ENCODE measurements at regions of chr1 and their contacts with region 1.

Region 1: DNA sequence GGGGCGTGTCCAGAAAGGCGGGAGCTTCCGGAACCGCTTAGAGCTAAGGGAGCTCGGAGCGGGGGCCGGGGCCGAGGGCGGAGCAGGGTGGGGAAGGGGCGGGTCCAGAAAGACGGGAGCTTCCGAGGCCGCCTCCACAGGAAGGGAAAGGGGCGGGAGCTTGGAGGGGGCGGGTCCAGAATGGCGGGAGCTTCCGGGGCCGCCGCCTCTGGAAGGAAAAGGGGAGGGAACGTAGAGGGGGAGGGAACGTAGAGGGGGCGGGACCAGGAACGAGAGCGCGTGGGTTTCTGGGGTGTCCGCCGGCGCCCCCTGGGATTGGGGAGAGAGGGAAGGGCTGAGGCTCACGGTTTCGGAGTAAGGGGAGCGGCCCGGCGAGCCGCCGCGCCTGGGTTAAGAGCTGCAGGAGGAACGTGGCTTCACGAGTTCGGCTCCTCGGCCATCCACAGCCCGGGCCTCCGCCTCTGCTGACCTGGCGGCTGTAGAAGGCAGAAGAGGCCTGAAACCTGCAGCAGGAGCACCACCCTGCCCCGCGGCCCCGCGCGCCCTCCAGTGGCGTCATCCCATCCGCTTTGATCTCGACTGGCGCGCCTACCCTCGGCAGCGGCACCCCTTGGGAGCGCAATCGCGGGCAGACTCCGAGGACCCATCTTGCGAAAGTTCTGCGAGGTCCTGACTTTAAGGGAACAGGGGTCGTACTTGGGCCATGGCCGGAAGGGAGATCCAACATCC is 22.9 kb upstream of the HPDL start:
- DNase-seq: peak; percentile 98 to 99
- ATAC-seq: peak; percentile 90 to 95
- H3K4me3 ChIP-seq: peak overlapping the region; percentile 77 to 91 (median 82)
- H3K27ac ChIP-seq: peak overlapping the region; percentile 92 to 95 (median 94)
- H3K4me1 ChIP-seq: peaks cover 8 to 16% of the 10 kb centered on the region in 2 donors
- H3K27me3 ChIP-seq: no peaks in the 10 kb centered on the region
- CTCF ChIP-seq: peak; percentile 56 to 78 (median 75)
- POLR2A ChIP-seq: peak; percentile 60 to 67

Region 2: GRCh38 chr1:44775078-44775929 is 528.4 kb before region 1 on chr1 and contains the start of gene RPS8:
- in situ Hi-C with region 1: no loop called
- intact Hi-C with region 1: loop called (anchors 5 kb)
- DNase-seq: peak; percentile 91 to 93
- ATAC-seq: peak; percentile 94 to 96
- H3K4me3 ChIP-seq: peak within 1 kb of the TSS; percentile 74 to 99 (median 85)
- H3K27ac ChIP-seq: peak within 1 kb of the TSS; percentile 91 to 100 (median 97)
- H3K4me1 ChIP-seq: peaks cover 9 to 12% of the 10 kb centered on the region in 2 donors
- H3K27me3 ChIP-seq: no peaks in the 10 kb centered on the region
- CTCF ChIP-seq: peak in 2 of 5 experiments; percentile 5 to 36
- POLR2A ChIP-seq: peak; percentile 95 to 97
- total RNA-seq, gene RPS8: 1,137 to 2,085 (median 1,818) TPM

Region 3: GRCh38 chr1:44835738-44836675 is 467.7 kb before region 1 on chr1:
- in situ Hi-C with region 1: no loop called
- intact Hi-C with region 1: loop called (anchors 5 kb)
- DNase-seq: peak; percentile 39 to 63
- ATAC-seq: peak; percentile 57 to 77
- H3K4me3 ChIP-seq: no peak overlapping the region
- H3K27ac ChIP-seq: no peak overlapping the region
- H3K4me1 ChIP-seq: no peaks in the 10 kb centered on the region
- H3K27me3 ChIP-seq: no peaks in the 10 kb centered on the region
- CTCF ChIP-seq: peak; percentile 56 to 87 (median 69)
- POLR2A ChIP-seq: no peak

Region 4: DNA sequence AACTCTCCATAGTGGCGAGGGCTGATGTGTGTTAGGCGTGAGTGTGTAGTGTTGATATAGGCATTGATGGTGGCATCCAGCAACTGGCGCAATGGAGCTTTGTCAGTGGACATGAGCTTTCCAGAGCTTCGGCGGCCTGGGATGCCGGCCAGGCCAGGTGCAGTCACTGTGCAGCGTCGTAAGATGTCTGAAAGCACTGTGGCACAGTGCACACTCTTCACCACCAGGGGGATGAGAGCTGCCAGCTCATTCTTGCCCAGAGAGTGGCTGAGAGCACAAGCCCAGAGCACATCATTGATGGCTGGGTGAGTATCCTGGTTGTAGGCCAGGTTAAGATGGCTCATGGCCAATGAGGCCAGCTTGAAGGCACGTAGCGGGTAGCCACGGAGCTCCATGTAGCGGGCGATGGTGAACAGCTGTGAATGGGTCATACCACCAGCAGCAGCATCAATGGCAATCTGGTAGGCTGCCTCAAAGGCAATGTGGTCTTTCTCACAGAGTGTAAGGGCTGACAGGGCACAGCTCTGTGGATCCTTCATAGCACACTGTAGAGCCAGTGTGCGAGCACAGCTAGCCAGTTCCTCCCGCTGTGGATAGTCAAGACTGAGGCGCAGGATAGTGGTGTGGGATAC is 285.0 kb before region 1 on chr1:
- in situ Hi-C with region 1: loop called (anchors 5 kb)
- intact Hi-C with region 1: loop called (anchors 1 kb)
- DNase-seq: no peak
- ATAC-seq: peak in 1 of 2 donors; percentile 46
- H3K4me3 ChIP-seq: no peak overlapping the region
- H3K27ac ChIP-seq: no peak overlapping the region
- H3K4me1 ChIP-seq: peaks cover 6 to 15% of the 10 kb centered on the region in 2 donors
- H3K27me3 ChIP-seq: no peaks in the 10 kb centered on the region
- CTCF ChIP-seq: peak in 4 of 5 experiments; percentile 35 to 52 (median 43)
- POLR2A ChIP-seq: no peak

Region 5: DNA sequence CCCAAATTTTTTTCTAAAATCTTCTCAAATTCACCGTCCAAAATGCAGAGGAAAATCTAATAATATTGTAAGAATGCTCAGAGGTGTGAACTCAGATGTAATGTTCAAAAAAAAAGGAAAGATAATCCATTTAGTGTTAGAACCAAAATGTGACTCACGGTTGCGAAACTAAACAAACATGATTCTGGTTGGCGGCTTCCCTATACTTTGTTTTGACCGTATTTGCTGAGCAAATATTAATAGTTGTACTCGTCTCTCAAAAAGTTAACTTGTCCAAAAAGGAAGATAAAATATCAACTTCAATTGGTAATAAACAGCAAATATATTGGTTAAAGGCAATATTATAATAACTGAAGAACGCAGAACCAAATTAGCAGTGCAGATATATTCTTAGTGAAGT is 131.7 kb before region 1 on chr1:
- in situ Hi-C with region 1: no loop called
- intact Hi-C with region 1: no loop called
- DNase-seq: no peak
- ATAC-seq: no peak
- H3K4me3 ChIP-seq: no peak overlapping the region
- H3K27ac ChIP-seq: no peak overlapping the region
- H3K4me1 ChIP-seq: peaks cover 0 to 8% of the 10 kb centered on the region in 2 donors
- H3K27me3 ChIP-seq: no peaks in the 10 kb centered on the region
- CTCF ChIP-seq: no peak
- POLR2A ChIP-seq: no peak

Region 6: GRCh38 chr1:45339789-45340570 is 36.2 kb after region 1 on chr1 and contains the starts of genes MUTYH and TOE1:
- in situ Hi-C with region 1: no loop called
- intact Hi-C with region 1: loop called (anchors 1 kb)
- DNase-seq: peak; percentile 81 to 88
- ATAC-seq: peak; percentile 92 to 93
- H3K4me3 ChIP-seq: peak within 1 kb of the TSS; percentile 88 to 98 (median 96)
- H3K27ac ChIP-seq: peak within 1 kb of the TSS; percentile 92 to 100 (median 100)
- H3K4me1 ChIP-seq: peaks cover 17 to 18% of the 10 kb centered on the region in 2 donors
- H3K27me3 ChIP-seq: no peaks in the 10 kb centered on the region
- CTCF ChIP-seq: peak in 2 of 5 experiments; percentile 26 to 34
- POLR2A ChIP-seq: peak; percentile 56
- total RNA-seq, gene MUTYH: 10.1 to 20.6 (median 11.0) TPM
- total RNA-seq, gene TOE1: 2.9 to 9.4 (median 5.3) TPM

Region 7: DNA sequence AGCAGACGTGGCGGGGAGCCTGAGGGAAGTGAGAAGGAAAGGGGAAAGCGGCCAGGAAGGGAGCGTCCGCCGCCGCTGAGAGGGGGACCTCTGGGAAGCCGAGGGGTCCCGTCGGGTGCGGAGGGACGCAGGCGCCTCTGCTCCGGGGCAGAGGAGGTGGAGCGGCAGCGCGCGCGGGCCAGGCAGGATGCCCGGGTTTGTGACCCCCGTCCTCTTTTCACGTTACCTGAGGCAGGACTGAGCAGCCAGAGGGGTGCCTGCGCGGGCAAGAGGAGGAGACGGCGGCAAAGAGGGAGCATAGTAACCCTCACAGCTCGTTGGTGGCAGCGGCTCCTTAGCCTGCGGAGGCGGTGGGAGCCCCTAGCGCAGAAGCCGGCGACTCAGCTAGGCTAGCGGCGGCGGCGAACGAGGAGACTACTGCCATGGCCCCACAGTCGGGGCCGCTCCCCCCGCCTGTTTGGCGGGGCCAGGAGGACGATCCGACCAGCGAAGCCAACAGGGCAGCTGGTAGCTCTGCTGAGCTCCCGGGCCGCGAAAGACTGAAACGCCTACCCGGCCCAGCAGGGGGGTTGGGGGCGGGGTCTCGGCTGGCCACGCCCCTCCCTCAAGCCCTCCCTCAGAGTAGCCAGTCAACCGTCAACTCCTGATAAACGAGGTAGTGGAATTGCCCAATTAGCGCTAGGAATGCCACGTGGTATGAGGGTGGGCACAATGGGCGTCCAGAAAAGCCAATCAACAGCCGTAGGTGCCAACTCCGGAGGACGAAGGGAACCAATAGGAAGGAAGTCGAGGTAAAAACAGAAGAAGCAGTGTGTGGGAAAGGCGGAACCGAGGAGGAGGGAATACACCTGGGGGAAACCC is 187.1 kb after region 1 on chr1 and contains the start of gene TESK2:
- in situ Hi-C with region 1: no loop called
- intact Hi-C with region 1: loop called (anchors 2 kb)
- DNase-seq: peak; percentile 98 to 99
- ATAC-seq: peak; percentile 95 to 98
- H3K4me3 ChIP-seq: peak within 1 kb of the TSS; percentile 68 to 99 (median 90)
- H3K27ac ChIP-seq: peak within 1 kb of the TSS; percentile 87 to 96 (median 92)
- H3K4me1 ChIP-seq: peaks cover 14 to 19% of the 10 kb centered on the region in 2 donors
- H3K27me3 ChIP-seq: no peaks in the 10 kb centered on the region
- CTCF ChIP-seq: peak in 4 of 5 experiments; percentile 27 to 56 (median 30)
- POLR2A ChIP-seq: peak; percentile 89 to 92
- total RNA-seq, gene TESK2: 3.4 to 5.8 (median 4.5) TPM

Region 8: DNA sequence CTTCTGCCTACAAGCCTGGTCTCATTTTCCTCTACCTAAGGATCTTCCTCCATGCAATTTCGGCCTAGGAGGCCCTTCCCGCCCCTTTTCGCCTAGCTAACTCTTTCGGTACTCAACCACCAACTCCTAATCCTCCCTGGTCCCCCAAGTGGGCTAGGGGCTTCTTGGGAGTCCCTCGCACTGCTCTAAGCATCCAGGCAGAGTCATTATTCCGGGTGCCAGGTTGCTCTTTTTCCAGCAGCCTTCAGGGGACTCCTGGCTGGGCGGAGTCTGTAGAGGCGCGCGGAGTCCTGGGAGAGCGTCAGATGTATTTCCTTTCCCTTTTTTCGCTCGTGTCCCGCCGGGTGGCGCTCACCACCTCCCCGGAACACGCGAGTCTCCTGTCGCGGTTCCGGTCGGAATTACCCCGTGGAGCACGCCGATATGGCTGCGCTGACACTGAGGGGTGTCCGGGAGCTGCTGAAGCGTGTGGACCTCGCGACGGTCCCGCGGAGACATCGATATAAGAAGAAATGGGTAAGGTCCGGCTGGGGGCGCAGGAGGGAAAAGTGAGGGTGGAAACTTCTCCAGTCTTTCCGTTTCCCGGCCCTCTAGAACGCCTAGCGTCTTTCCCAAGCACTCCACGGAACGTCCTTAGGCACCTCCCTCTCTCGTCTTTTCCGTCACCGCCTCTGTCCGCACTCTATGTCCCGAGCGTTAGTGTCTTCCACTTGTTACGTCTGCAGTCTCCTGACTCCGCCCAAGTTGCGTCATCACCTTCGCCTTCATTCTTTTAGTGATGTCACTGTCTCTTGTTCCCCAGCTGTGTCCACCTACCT is 1036.9 kb after region 1 on chr1 and contains the start of gene NSUN4:
- in situ Hi-C with region 1: no loop called
- intact Hi-C with region 1: no loop called
- DNase-seq: peak; percentile 88 to 93
- ATAC-seq: peak; percentile 94 to 96
- H3K4me3 ChIP-seq: peak within 1 kb of the TSS; percentile 66 to 83 (median 77)
- H3K27ac ChIP-seq: peak within 1 kb of the TSS; percentile 91 to 99 (median 94)
- H3K4me1 ChIP-seq: peaks cover 16 to 20% of the 10 kb centered on the region in 2 donors
- H3K27me3 ChIP-seq: no peaks in the 10 kb centered on the region
- CTCF ChIP-seq: peak; percentile 51 to 73 (median 62)
- POLR2A ChIP-seq: peak; percentile 86 to 89
- total RNA-seq, gene NSUN4: 15.5 to 22.5 (median 20.8) TPM